ENCODE measurements at regions of chr16 and their contacts with region 1.

Region 1: DNA sequence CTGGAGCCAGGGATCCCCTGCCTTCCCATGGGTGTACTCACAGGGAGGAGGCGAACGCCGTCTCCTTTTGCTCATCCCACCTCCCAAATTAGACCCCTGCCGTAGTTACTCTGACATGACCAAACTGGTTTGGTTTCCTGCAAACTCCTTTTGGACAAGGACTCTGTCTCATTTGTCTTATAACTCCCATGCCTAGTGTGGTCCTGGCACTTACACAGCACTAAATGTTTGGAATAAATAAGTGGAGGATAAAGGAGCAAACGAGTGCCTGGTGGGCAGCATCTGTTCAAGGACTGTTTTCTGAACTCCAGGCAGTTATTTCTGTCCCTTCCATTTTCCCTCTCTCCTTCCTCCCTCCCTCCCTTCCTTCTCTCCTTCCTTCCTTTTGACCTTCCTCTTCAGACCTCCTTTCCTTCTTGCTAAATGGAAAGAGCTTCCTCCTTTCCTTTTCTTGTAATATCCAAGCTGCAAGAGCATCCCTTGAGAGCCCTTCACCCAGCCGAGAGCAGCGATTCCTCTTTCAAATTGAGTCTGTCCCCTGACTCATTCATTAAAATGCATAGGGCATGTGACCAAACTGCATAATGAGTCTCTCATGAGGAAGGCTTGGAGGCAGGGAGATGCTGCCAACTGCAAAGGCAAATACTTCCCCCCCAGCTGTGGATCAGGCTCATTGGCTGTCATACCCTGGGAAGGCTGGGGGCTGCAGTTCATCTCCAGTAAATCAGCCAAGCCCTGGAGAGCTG is 36.8 kb downstream of the CHD9 start:
- DNase-seq: peak; percentile 69
- H3K4me3 ChIP-seq: no peak overlapping the region
- H3K27ac ChIP-seq: peak overlapping the region; percentile 72
- H3K4me1 ChIP-seq: peaks cover 39% of the 10 kb centered on the region
- H3K27me3 ChIP-seq: no peaks in the 10 kb centered on the region
- CTCF ChIP-seq: no peak
- POLR2A ChIP-seq: no peak

Region 2: GRCh38 chr16:53071748-53072301 is 19.8 kb before region 1 on chr16:
- CTCF ChIA-PET with region 1: interaction called, 3 read pairs
- POLR2A ChIA-PET with region 1: interaction called, 7 read pairs
- dilution Hi-C with region 1: no loop called
- intact Hi-C with region 1: loop called (anchors 1 kb)
- DNase-seq: peak; percentile 88
- H3K4me3 ChIP-seq: peak overlapping the region in 1 of 3 experiments; percentile 23
- H3K27ac ChIP-seq: peak overlapping the region; percentile 5
- H3K4me1 ChIP-seq: peaks cover 11% of the 10 kb centered on the region
- H3K27me3 ChIP-seq: no peaks in the 10 kb centered on the region
- CTCF ChIP-seq: no peak
- POLR2A ChIP-seq: no peak

Region 3: GRCh38 chr16:53080345-53081031 is 11.2 kb before region 1 on chr16:
- CTCF ChIA-PET with region 1: interaction called, 11 read pairs
- POLR2A ChIA-PET with region 1: interaction called, 3 read pairs
- dilution Hi-C with region 1: no loop called
- intact Hi-C with region 1: loop called (anchors 1 kb)
- DNase-seq: peak; percentile 80
- H3K4me3 ChIP-seq: no peak overlapping the region
- H3K27ac ChIP-seq: peak overlapping the region; percentile 74
- H3K4me1 ChIP-seq: peaks cover 32% of the 10 kb centered on the region
- H3K27me3 ChIP-seq: no peaks in the 10 kb centered on the region
- CTCF ChIP-seq: no peak
- POLR2A ChIP-seq: no peak

Region 4: DNA sequence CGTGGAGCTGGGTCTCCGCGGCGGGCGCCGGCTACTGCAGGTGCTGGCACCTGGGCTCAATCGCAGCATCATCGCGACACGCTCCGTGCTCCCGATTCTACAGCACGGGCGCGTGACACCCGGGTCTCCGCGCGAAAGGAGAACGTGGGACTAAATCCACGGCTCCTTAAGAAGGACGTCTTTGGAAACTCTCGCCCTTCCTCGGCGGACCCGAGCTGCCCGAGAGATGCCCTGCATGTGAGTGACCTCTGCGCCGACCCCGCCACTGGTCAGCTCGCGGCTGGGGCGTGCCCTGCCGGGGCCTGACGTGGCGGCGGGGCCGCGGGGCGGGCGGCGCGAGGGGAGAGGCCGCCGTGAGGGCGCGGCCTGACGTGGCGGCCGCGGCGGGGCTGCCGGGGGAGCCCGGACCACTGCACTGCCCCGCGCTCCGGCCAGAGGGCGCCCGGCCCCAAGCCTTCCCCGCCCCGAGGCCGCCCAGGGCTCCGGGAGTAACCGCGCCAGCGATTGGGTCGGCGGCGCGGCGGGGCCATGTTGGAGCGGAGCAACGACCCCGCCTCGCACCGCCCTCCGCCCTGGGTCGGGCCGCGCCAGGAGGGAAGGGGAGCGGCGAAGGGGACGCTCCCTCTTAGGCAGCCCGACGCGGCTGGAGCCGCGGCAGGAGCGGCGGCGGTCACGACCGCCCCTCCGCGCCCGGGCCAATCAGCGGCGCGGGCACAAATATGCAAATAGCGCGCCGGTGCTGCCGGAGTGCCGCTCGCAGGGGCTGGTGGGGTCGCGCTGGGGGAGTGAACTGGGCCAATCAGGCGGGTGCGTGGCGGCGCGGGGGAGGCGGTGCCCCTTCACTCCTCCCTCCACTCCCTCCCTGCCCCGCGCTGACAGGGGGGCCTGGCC is 38.8 kb after region 1 on chr16:
- CTCF ChIA-PET with region 1: no interaction called
- POLR2A ChIA-PET with region 1: no interaction called
- dilution Hi-C with region 1: no loop called
- intact Hi-C with region 1: loop called (anchors 1 kb)
- DNase-seq: peak; percentile 96
- H3K4me3 ChIP-seq: peak overlapping the region; percentile 71 to 92 (median 74)
- H3K27ac ChIP-seq: peak overlapping the region; percentile 89
- H3K4me1 ChIP-seq: peaks cover 18% of the 10 kb centered on the region
- H3K27me3 ChIP-seq: no peaks in the 10 kb centered on the region
- CTCF ChIP-seq: peak; percentile 55 to 63
- POLR2A ChIP-seq: peak; percentile 68

Region 5: GRCh38 chr16:53518550-53519416 is 427.1 kb after region 1 on chr16:
- CTCF ChIA-PET with region 1: no interaction called
- POLR2A ChIA-PET with region 1: no interaction called
- dilution Hi-C with region 1: no loop called
- intact Hi-C with region 1: loop called (anchors 5 kb)
- DNase-seq: peak; percentile 92
- H3K4me3 ChIP-seq: peak overlapping the region in 1 of 3 experiments; percentile 51
- H3K27ac ChIP-seq: peak overlapping the region; percentile 97
- H3K4me1 ChIP-seq: peaks cover 39% of the 10 kb centered on the region
- H3K27me3 ChIP-seq: no peaks in the 10 kb centered on the region
- CTCF ChIP-seq: no peak
- POLR2A ChIP-seq: peak; percentile 73